ENCODE measurements at regions of chr10 and their contacts with region 1.

Region 1: DNA sequence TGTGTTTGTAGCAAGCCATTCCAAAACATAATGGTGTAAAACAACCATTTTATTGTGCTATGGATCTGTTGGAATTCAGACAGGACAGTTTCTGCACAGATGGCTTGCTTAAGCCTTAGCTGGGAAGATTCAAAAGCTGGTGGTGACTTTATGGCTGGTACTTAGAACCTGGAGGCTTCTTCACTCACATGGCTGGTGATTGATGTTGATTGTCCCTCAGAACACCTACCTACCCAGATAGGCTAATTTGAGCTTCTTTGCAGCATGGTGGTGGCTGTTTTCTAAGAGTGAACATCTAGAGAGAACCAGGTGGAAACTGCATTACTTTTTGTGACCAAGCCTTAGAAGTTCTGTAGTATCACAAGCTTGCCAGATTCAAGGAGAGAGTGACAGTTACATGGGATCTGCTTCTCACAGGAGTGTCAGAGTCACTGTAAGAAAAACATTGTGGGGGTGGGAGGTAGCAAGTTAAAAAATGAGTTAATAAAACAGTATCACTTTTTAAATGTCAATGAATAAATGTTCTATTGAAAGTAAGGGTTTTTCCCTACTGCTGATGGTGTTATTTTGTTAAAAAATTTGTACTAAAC is 7.1 kb downstream of the R3HCC1L start:
- DNase-seq: no peak
- H3K4me3 Mint-ChIP-seq: no peak overlapping the region
- H3K27ac Mint-ChIP-seq: peak overlapping the region; percentile 56
- H3K4me1 Mint-ChIP-seq: peaks cover 41% of the 10 kb centered on the region
- H3K27me3 Mint-ChIP-seq: no peaks in the 10 kb centered on the region

Region 2: GRCh38 chr10:98212196-98212595 is 70.6 kb after region 1 on chr10:
- intact Hi-C with region 1: loop called (anchors 10 kb)
- DNase-seq: no peak
- H3K4me3 Mint-ChIP-seq: no peak overlapping the region
- H3K27ac Mint-ChIP-seq: no peak overlapping the region
- H3K4me1 Mint-ChIP-seq: peaks cover 7% of the 10 kb centered on the region
- H3K27me3 Mint-ChIP-seq: no peaks in the 10 kb centered on the region

Region 3: GRCh38 chr10:98446661-98447221 is 305.2 kb after region 1 on chr10 and contains the start of gene HPS1:
- intact Hi-C with region 1: loop called (anchors 2 kb)
- DNase-seq: peak; percentile 95
- H3K4me3 Mint-ChIP-seq: peak within 1 kb of the TSS; percentile 95
- H3K27ac Mint-ChIP-seq: peak within 1 kb of the TSS; percentile 90
- H3K4me1 Mint-ChIP-seq: peaks cover 21% of the 10 kb centered on the region
- H3K27me3 Mint-ChIP-seq: peaks cover 18% of the 10 kb centered on the region
- total RNA-seq, gene HPS1: 58.6 and 61.5 TPM in 2 replicates

Measured in activated CD4-positive, alpha-beta T cell treated with anti-CD3 and anti-CD28 coated beads, Interleukin-2, amount 10 ng/mL, durations not matched to agents 24 days and 14 days (primary cell).